ENCODE measurements at regions of chr15 and their contacts with region 1.

Region 1: GRCh38 chr15:90648137-90649070 is 68.7 kb upstream of the BLM start:
- DNase-seq: peak; percentile 75
- H3K4me3 Mint-ChIP-seq: peak overlapping the region; percentile 35
- H3K27ac Mint-ChIP-seq: peak overlapping the region; percentile 97
- H3K4me1 Mint-ChIP-seq: peaks cover 49% of the 10 kb centered on the region
- H3K27me3 Mint-ChIP-seq: no peaks in the 10 kb centered on the region

Region 2: GRCh38 chr15:90571063-90571541 is 77.3 kb before region 1 on chr15:
- intact Hi-C with region 1: no loop called
- DNase-seq: no peak
- H3K4me3 Mint-ChIP-seq: peak overlapping the region; percentile 38
- H3K27ac Mint-ChIP-seq: peak overlapping the region; percentile 64
- H3K4me1 Mint-ChIP-seq: peaks cover 92% of the 10 kb centered on the region
- H3K27me3 Mint-ChIP-seq: no peaks in the 10 kb centered on the region

Region 3: GRCh38 chr15:90660195-90660998 is 12.0 kb after region 1 on chr15:
- intact Hi-C with region 1: loop called (anchors 1 kb)
- DNase-seq: peak; percentile 71
- H3K4me3 Mint-ChIP-seq: peak overlapping the region; percentile 77
- H3K27ac Mint-ChIP-seq: peak overlapping the region; percentile 96
- H3K4me1 Mint-ChIP-seq: peaks cover 81% of the 10 kb centered on the region
- H3K27me3 Mint-ChIP-seq: peaks cover 1% of the 10 kb centered on the region

Region 4: GRCh38 chr15:90677807-90678790 is 29.7 kb after region 1 on chr15:
- intact Hi-C with region 1: loop called (anchors 1 kb)
- DNase-seq: peak; percentile 37
- H3K4me3 Mint-ChIP-seq: peak overlapping the region; percentile 68
- H3K27ac Mint-ChIP-seq: peak overlapping the region; percentile 96
- H3K4me1 Mint-ChIP-seq: peaks cover 48% of the 10 kb centered on the region
- H3K27me3 Mint-ChIP-seq: peaks cover under 1% of the 10 kb centered on the region

Region 5: DNA sequence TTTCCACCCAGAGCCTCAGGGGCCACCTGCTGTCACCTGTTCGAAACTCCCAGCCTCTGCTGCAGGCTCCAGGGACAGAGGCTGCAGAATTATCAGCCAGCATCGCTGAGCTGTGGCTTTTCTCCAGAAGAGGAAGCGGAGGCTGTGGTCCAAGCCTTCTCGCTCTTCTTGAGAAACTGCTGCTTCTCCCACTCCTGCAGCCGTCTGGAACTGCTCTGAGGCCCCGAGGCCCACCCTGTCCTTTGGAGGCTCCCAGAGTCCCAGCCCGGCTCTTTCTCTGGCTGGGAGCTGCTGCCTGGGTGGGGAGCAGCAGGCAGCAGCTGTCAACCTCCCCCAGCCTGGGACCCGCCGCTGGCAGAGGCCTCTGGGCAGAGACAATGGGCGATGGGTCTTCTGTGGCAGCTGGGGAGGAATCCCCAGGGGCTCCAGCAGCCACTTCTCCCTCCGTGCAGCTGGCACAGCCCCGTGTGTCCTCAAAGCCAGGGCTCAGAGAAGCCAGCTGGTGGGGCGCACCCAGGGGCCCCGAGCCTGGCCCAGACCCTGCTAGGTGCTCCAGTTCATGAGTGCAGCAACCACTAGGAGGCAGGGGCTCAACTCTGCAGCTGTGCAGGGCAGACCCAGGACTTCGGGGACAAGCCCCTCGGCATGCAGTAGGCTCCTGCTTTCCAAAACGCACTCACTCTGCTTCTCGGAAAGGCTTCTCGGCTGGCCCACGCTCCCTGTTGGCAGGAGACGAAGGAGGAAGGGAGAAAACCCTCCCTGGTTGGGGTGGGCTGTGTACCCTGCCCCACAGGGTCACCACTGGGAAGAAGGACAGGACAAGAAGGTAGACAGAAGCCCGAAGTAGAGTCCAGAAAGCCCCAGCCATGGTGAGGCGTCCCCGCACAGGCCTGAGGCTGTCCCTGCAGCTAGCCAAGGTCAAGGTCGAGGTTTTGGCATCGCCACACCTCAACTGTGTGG is 170.1 kb after region 1 on chr15:
- intact Hi-C with region 1: loop called (anchors 5 kb)
- DNase-seq: peak; percentile 40
- H3K4me3 Mint-ChIP-seq: peak overlapping the region; percentile 74
- H3K27ac Mint-ChIP-seq: peak overlapping the region; percentile 99
- H3K4me1 Mint-ChIP-seq: peaks cover 82% of the 10 kb centered on the region
- H3K27me3 Mint-ChIP-seq: no peaks in the 10 kb centered on the region

Region 6: DNA sequence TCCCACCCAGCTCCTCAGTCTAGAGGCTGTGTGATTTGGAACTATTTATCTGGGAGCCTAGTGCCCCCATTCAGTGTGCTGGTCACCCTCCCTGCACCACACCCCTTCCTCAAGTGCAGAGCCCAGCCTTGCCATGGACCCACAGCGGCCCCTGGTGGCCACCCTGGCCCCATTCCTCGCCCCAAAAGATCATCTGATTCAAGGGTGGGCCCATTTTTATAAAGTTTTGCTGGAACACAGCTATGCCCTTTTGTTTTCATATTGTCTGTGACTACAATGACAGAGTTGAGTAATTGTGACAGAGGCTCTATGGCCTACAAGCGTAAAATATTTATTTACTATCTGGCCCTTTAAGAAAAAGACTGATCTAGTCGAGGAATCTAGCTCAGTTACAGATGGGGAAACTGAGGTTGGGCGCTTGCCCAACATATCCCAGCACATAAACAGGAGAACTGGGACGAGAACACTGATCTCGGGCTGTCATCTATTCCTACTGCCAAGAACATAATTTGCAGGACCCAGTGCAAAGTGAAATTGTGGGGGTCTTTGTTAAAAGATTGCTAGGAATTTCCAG is 237.7 kb after region 1 on chr15:
- intact Hi-C with region 1: loop called (anchors 1 kb)
- DNase-seq: peak; percentile 66
- H3K4me3 Mint-ChIP-seq: peak overlapping the region; percentile 51
- H3K27ac Mint-ChIP-seq: peak overlapping the region; percentile 87
- H3K4me1 Mint-ChIP-seq: peaks cover 50% of the 10 kb centered on the region
- H3K27me3 Mint-ChIP-seq: no peaks in the 10 kb centered on the region

Region 7: GRCh38 chr15:91068966-91069365 is 420.6 kb after region 1 on chr15:
- intact Hi-C with region 1: no loop called
- DNase-seq: no peak
- H3K4me3 Mint-ChIP-seq: no peak overlapping the region
- H3K27ac Mint-ChIP-seq: no peak overlapping the region
- H3K4me1 Mint-ChIP-seq: no peaks in the 10 kb centered on the region
- H3K27me3 Mint-ChIP-seq: peaks cover 22% of the 10 kb centered on the region